ENCODE measurements at regions of chr15 and their contacts with region 1.

Region 1: GRCh38 chr15:75684642-75685041 is 28.0 kb downstream of the CSPG4 start:
- DNase-seq: no peak
- H3K4me3 ChIP-seq: no peak overlapping the region
- H3K27ac ChIP-seq: peak overlapping the region in 1 of 2 donors; percentile 67
- H3K4me1 ChIP-seq: peaks cover 0 to 31% (median 25%) of the 10 kb centered on the region in 4 donors
- H3K27me3 ChIP-seq: no peaks in the 10 kb centered on the region
- CTCF ChIP-seq: no peak

Region 2: GRCh38 chr15:75554717-75555116 is 129.9 kb before region 1 on chr15:
- intact Hi-C with region 1: no loop called
- DNase-seq: no peak
- H3K4me3 ChIP-seq: no peak overlapping the region
- H3K27ac ChIP-seq: no peak overlapping the region
- H3K4me1 ChIP-seq: peaks cover 0 to 5% (median 0%) of the 10 kb centered on the region in 4 donors
- H3K27me3 ChIP-seq: no peaks in the 10 kb centered on the region
- CTCF ChIP-seq: no peak

Region 3: DNA sequence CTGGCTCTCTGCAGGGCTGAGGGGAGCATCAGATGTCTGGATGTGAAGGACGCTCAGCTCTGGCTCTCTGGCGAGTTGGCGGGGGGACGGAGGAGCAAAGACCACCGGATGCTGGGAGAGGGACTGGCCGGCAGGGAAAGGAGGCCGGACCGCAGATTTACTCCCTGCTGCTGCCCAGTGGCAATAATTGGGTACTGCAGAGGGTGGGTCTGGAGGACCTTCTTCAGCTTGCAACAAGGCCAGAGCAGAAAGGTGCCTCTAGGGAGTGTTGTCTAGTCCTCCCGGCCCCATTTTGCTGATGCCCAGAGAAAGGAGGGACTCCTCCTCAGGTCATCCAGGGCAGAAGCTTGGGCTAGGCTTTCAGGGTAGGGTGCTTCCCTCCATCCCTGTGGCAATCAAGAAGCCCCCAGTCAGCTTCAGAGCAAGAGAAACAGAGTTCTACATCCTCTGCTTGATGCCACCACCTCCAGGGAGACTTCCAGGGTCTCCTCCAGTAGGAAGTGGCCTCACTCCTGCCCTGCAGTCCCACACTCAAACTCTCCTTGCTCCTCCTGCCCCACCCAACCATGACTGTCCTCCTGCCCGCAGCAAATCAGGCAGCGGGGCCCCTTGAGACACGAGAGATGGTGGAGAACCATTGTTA is 48.3 kb after region 1 on chr15:
- intact Hi-C with region 1: loop called (anchors 2 kb)
- DNase-seq: peak; percentile 66 to 85
- H3K4me3 ChIP-seq: no peak overlapping the region
- H3K27ac ChIP-seq: peak overlapping the region in 1 of 2 donors; percentile 4
- H3K4me1 ChIP-seq: peaks cover 6 to 18% (median 15%) of the 10 kb centered on the region in 4 donors
- H3K27me3 ChIP-seq: no peaks in the 10 kb centered on the region
- CTCF ChIP-seq: peak; percentile 95